Right ventricle myocardium superior (tissue), 1 donor: ENCODE measurements at regions of chr15 and their contacts with region 1.

Region 1: GRCh38 chr15:48285329-48286214 is 45.7 kb upstream of the DUT start:
- DNase-seq: no peak
- ATAC-seq: peak; percentile 87

Region 2: DNA sequence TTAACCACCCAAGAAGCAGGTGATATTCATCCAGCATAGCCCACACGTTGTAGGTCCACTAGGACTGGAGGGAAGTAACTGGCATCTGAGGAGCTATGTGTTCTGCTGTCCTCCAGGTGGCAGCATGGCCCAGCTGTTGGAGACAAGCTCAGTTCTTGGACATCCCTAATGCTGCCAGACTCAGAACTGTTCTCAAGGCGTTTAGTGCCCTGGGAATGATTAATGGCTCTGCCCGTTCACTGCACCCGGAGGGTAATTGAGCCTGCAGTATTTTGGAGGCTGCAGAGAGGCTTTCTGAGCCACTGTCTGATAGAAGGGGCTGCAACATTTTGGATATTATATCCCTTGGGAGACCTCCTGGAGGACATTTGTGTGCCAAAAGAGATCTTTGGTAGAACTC is 1089.5 kb before region 1 on chr15:
- intact Hi-C with region 1: loop called (anchors 5 kb)
- DNase-seq: peak; percentile 81
- ATAC-seq: peak; percentile 96

Region 3: GRCh38 chr15:48233246-48233645 is 52.3 kb before region 1 on chr15:
- intact Hi-C with region 1: no loop called
- DNase-seq: no peak
- ATAC-seq: no peak